ENCODE measurements at regions of chr16 and their contacts with region 1.

Region 1: DNA sequence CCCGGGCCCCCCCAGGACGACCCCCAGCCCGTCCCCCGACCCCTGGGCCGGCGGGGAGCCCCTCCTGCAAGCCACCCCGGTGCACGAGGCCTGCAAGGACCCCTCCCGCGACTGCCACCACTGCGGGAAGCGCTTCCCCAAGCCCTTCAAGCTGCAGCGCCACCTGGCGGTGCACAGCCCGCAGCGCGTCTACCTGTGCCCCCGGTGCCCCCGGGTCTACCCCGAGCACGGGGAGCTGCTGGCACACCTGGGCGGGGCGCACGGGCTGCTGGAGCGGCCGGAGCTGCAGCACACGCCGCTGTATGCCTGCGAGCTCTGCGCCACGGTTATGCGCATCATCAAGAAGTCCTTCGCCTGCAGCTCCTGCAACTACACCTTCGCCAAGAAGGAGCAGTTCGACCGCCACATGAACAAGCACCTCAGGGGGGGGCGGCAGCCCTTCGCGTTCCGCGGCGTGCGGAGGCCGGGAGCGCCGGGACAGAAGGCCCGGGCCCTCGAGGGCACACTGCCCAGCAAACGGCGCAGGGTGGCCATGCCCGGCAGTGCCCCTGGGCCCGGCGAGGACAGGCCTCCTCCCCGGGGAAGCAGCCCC is 15.6 kb upstream of the ZFPM1 start:
- DNase-seq: peak; percentile 90
- H3K4me3 Mint-ChIP-seq: no peak overlapping the region
- H3K27ac Mint-ChIP-seq: no peak overlapping the region
- H3K4me1 Mint-ChIP-seq: no peaks in the 10 kb centered on the region
- H3K27me3 Mint-ChIP-seq: no peaks in the 10 kb centered on the region

Region 2: GRCh38 chr16:88194397-88195268 is 242.8 kb before region 1 on chr16:
- intact Hi-C with region 1: loop called (anchors 2 kb)
- DNase-seq: no peak
- H3K4me3 Mint-ChIP-seq: no peak overlapping the region
- H3K27ac Mint-ChIP-seq: no peak overlapping the region
- H3K4me1 Mint-ChIP-seq: no peaks in the 10 kb centered on the region
- H3K27me3 Mint-ChIP-seq: no peaks in the 10 kb centered on the region

Region 3: DNA sequence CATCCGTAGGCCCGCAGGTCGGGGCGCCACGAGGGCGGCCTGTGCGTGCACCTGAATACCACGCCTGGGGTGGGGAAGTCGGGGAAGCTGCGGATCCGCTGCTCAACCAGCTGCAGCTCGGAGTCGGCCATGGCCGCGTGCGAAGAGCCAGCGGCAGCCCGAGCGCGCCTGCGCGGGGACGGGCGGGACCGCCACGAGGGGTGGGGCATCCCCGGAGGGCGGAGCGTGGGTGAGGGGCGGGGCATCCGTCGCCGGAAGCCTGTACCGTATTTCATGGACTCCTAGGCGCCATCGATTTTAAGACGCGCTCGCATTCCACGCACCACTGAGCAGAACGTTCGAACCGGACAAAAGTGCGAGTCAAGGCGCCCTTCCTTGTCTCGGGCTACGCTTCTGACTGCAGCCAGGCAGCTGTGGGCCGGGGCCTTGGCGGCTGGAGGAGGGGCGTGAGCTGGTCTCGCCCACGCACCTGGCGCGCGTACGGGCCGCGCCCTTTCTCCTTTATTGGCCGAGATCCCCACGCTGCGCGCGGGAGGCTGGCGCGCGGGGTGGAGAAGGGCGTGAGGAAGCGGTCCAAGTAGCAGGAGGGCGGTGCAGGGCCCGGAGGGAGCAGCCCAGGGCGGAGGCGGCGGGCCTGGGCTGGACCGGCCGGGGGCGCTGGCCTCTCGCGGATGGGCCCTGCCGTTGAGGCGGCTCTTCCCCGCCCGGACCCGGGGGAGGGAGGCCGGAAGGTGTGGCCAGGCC is 374.5 kb after region 1 on chr16 and contains the start of gene APRT:
- intact Hi-C with region 1: no loop called
- DNase-seq: peak; percentile 99
- H3K4me3 Mint-ChIP-seq: peak within 1 kb of the TSS; percentile 89
- H3K27ac Mint-ChIP-seq: peak within 1 kb of the TSS; percentile 95
- H3K4me1 Mint-ChIP-seq: peaks cover 15% of the 10 kb centered on the region
- H3K27me3 Mint-ChIP-seq: no peaks in the 10 kb centered on the region
- total RNA-seq, gene APRT: 312 and 314 TPM in 2 replicates